ENCODE measurements at regions of chr6 and their contacts with region 1.

Region 1: GRCh38 chr6:33248925-33249731 is 22.5 kb downstream of the VPS52 start:
- DNase-seq: peak; percentile 99 to 100 (median 100)
- H3K4me3 ChIP-seq: peak overlapping the region; percentile 70 to 86 (median 74)
- H3K27ac ChIP-seq: peak overlapping the region; percentile 89 to 94
- H3K4me1 ChIP-seq: peaks cover 10 to 27% (median 25%) of the 10 kb centered on the region in 4 experiments
- H3K27me3 ChIP-seq: peaks cover 0 to 2% (median 0%) of the 10 kb centered on the region in 5 experiments

Region 2: DNA sequence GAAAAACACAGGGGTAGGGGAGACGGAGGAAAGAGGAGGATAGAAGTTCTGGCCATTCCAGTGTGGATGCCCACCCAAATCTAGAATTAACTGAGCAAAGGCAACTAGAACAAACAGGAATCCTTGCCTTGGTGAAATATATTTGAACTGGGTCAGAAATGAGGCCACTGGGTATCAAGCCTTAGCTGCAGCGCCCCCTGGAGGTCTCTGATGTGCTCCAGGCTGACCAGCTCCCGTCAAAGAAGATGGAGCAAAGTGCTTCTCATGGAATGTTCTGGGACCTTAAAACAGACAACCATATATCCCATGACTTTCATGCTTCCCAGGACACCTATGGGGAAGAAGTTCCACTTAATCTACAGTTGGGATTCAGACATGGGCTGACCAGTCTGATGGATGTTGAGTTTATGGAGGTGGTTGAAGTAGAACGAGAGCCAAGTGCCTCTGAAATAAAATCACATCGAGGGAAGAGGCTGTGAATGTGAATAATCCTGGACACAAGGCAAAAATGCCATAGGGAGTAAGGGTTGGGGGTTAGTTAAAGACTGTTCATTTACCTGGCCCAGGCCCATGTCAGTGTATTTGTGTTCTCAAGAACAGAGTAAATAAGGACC is 122.9 kb before region 1 on chr6:
- CTCF ChIA-PET with region 1: interaction called, 20 read pairs
- POLR2A ChIA-PET with region 1: no interaction called
- DNase-seq: peak; percentile 51 to 78 (median 66)
- H3K4me3 ChIP-seq: no peak overlapping the region
- H3K27ac ChIP-seq: no peak overlapping the region
- H3K4me1 ChIP-seq: no peaks in the 10 kb centered on the region
- H3K27me3 ChIP-seq: no peaks in the 10 kb centered on the region

Region 3: GRCh38 chr6:33172688-33173534 is 76.2 kb before region 1 on chr6:
- CTCF ChIA-PET with region 1: interaction called, 12 read pairs
- POLR2A ChIA-PET with region 1: no interaction called
- DNase-seq: peak; percentile 29 to 44 (median 31)
- H3K4me3 ChIP-seq: no peak overlapping the region
- H3K27ac ChIP-seq: no peak overlapping the region
- H3K4me1 ChIP-seq: no peaks in the 10 kb centered on the region
- H3K27me3 ChIP-seq: peaks cover 0 to 2% (median 0%) of the 10 kb centered on the region in 5 experiments

Region 4: DNA sequence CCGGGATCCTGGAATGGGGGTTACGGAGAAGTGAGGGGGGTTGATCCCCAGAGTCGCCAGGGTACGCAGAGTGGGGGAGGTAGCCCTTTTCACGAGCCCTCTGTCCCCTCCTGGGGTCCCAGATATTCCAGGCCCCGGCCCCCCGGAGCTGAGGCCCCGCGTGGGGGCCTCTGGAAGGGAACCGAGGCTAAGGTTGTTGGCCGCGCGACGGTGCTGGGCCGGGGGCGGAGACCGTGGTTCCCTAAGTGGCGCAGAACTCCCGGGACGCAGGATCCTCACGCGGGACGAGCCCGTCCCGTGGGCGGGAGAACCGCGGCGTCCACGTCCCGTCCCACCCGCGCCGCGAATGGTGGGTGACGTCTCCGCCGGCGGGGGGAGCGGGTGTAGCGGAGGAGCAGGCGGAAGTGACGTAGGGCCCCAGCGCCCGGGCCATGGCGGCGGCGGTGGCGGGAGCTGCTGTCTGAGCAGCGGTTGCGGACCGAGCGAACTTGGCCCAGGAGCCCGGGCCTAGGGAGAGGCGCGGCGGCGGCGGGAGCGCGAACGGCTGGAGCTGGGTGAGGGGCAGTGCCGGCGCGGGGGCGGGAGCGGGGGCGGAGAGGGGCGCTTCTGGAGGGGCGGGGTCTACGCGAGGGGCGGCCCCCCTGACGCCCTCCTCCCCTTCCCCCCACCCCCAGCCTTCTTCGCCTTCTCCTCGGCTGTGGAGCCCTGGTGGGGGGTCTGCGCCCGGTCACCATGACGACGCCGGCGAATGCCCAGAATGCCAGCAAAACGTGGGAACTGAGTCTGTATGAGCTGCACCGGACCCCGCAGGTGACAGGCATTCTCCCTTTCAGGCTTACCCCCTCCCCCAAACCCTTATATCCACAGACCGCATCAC is 40.8 kb before region 1 on chr6 and contains the start of gene RING1:
- CTCF ChIA-PET with region 1: interaction called, 14 read pairs
- POLR2A ChIA-PET with region 1: interaction called, 3 read pairs
- DNase-seq: peak; percentile 78 to 87 (median 79)
- H3K4me3 ChIP-seq: peak within 1 kb of the TSS; percentile 66 to 97 (median 83)
- H3K27ac ChIP-seq: peak within 1 kb of the TSS; percentile 85 to 97
- H3K4me1 ChIP-seq: peaks cover 8 to 44% (median 38%) of the 10 kb centered on the region in 4 experiments
- H3K27me3 ChIP-seq: peaks cover 0 to 2% (median 0%) of the 10 kb centered on the region in 5 experiments

Region 5: GRCh38 chr6:33264015-33264414 is 14.9 kb after region 1 on chr6:
- CTCF ChIA-PET with region 1: interaction called, 11 read pairs
- POLR2A ChIA-PET with region 1: no interaction called
- DNase-seq: no peak
- H3K4me3 ChIP-seq: no peak overlapping the region
- H3K27ac ChIP-seq: no peak overlapping the region
- H3K4me1 ChIP-seq: no peaks in the 10 kb centered on the region
- H3K27me3 ChIP-seq: no peaks in the 10 kb centered on the region

Region 6: DNA sequence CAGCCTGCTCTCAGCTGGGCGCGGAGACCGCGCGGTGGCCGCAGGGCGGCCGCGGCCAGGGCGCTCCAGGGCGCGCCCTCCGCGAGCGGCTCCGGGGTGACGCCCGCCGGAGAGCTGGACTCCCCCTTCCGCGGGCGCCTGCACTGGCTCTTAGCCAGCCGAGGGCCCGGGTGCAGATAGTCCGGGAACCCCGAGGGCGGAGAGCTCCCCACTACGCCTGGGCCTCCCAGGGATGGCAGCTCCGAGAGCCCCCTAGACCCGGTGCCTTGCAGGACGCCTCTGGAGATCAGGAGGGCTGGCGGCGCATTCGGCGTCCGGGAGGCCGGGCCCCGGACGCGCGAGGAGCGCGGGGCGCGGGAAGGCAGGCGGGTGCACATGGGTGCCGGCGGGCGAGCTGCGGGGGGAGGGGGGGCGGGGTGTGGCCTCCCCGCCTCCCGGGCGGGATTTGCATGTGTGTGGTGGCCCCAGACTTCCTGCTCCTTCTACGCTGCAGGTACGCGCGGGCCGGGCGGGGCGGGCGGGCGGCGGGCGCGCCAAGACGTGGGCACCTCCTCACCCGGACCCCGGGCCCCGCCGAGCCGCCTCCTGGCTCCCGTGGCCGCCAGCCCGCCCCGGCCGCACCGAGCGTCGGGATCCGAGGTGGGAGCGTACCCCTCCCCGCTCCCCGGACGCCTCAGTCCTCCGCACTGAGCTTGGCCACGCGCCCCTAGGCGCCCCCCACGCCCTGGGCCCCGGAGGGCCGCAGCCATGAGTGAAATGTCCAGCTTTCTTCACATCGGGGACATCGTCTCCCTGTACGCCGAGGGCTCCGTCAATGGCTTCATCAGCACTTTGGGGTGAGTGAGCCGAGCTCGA is 372.0 kb after region 1 on chr6 and contains the start of gene ITPR3:
- CTCF ChIA-PET with region 1: no interaction called
- POLR2A ChIA-PET with region 1: no interaction called
- DNase-seq: peak; percentile 34 to 66 (median 52)
- H3K4me3 ChIP-seq: peak within 1 kb of the TSS; percentile 65 to 96 (median 69)
- H3K27ac ChIP-seq: peak within 1 kb of the TSS in 1 of 2 experiments; percentile 46
- H3K4me1 ChIP-seq: peaks cover 2 to 26% (median 21%) of the 10 kb centered on the region in 4 experiments
- H3K27me3 ChIP-seq: peaks cover 0 to 16% (median 2%) of the 10 kb centered on the region in 5 experiments

Measured in common myeloid progenitor, CD34-positive (primary cell).